ENCODE measurements at regions of chr17 and their contacts with region 1.

Region 1: DNA sequence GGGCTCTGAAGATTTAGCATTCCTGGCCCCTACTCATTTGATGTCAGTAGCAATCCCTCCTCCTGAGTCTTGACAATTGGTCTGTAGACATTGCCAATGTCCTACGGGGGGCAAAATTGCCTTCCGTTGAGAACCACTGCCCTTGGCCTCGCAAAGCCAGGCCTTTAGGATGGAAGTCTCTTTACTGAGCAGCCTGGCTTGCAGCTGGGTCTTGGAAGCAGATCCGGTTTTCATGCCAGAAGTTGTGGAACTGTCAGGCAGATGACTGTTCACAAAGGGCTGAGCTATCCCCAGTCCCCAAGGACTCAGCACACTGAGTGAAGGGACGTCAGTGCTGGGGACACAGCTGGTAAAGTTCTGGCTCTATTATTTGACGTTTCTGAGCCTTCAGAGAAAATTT is 83.2 kb downstream of the WSCD1 start:
- DNase-seq: no peak
- ATAC-seq: no peak
- H3K4me3 ChIP-seq: no peak overlapping the region
- H3K27ac ChIP-seq: no peak overlapping the region
- H3K4me1 ChIP-seq: no peaks in the 10 kb centered on the region
- H3K27me3 ChIP-seq: peaks cover 4% of the 10 kb centered on the region
- CTCF ChIP-seq: no peak

Region 2: DNA sequence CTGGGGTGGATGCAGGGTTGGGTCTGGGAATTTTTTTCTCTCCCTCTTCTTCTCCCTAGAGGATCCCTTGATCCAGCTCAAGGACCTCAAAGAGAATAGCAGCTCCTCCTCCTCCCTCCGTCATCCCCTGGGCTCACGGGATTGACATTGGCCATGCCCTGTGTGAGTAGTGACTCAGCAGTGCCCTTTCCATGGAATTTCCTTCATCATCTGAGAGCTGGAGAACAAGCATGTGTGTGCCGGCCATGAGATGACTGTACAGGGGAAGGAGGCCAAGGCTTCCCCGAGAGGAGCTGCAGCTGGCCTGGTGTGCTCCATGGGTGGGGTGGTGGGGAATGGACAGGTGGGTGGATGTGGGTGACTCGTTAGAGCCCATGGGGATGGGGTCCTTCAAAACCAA is 92.1 kb before region 1 on chr17:
- intact Hi-C with region 1: loop called (anchors 5 kb)
- DNase-seq: no peak
- ATAC-seq: no peak
- H3K4me3 ChIP-seq: no peak overlapping the region
- H3K27ac ChIP-seq: no peak overlapping the region
- H3K4me1 ChIP-seq: no peaks in the 10 kb centered on the region
- H3K27me3 ChIP-seq: peaks cover 24% of the 10 kb centered on the region
- CTCF ChIP-seq: no peak